Right ventricle myocardium inferior (tissue), 1 donor: ENCODE measurements at regions of chr18 and their contacts with region 1.

Region 1: DNA sequence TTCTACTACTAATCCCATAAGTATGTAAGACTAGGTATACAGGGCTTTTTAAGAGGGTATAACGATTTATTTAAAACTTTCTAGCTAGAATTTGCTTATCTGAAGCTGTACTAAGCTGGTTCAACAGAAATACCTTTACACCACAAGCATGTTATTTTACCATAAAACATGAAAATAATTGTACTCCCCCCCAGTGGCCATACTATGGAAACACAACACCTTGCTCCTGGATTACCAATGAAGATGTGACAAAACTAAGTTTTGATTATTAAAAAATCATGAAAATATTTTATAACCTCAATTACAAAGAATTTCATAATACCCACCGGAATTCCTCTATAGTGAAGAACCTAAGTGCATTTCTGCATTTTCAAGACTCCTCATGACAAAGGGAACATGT is 27.3 kb downstream of the LPIN2 start:
- DNase-seq: no peak
- ATAC-seq: no peak

Region 2: GRCh38 chr18:2822213-2822921 is 163.3 kb before region 1 on chr18:
- intact Hi-C with region 1: no loop called
- DNase-seq: no peak
- ATAC-seq: no peak

Region 3: GRCh38 chr18:2948038-2948437 is 37.6 kb before region 1 on chr18:
- intact Hi-C with region 1: loop called (anchors 5 kb)
- DNase-seq: no peak
- ATAC-seq: peak; percentile 89

Region 4: DNA sequence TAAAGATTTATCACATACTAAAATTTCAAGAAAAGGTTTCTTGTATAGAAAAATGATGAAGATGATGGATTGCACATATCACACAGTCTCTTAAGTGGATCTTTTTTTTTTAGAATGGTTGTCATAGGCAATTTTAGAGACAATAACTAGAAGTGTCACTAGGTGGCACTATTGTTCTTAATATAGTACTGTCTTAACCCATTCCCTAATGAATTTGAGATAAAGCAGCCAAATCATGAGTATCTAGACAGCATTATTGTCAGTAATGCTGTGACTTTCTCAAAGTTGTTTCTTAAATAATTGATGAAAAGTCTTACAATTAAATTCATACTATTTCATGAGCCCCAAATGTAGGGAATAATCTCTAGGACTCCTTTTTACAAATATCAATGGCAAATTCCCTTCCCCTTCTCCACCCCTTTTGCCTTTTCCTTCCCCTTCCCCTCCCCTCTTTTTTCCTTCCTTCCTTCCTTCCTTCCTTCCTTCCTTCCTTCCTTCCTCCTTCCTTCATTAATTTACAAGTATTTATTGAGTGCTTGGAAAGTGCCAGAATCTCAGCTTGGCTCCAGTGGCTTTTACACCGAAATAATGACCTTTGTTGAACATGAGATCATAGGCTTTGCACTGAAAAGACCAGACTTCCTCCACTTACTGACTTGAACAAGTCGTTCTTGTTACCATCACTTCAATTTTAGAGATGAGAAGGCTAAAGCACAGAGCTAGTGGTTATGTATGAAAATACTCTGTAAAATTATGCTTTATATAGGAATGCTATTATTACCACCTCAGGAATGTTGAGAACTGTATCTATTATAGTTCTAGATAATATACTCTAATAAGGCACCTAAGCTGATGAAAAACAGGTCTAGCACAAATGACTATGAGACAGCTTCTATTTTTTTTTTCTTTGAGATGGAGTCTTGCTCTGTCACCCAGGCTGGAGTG is 296.1 kb after region 1 on chr18:
- intact Hi-C with region 1: no loop called
- DNase-seq: no peak
- ATAC-seq: peak; percentile 87

Region 5: GRCh38 chr18:3547891-3548615 is 562.4 kb after region 1 on chr18:
- intact Hi-C with region 1: no loop called
- DNase-seq: no peak
- ATAC-seq: no peak